ENCODE measurements at regions of chr5 and their contacts with region 1.

Region 1: GRCh38 chr5:113294311-113295110 is 140.3 kb downstream of the TSSK1B start:
- DNase-seq: peak; percentile 88
- H3K4me3 Mint-ChIP-seq: peak overlapping the region; percentile 89
- H3K27ac Mint-ChIP-seq: peak overlapping the region; percentile 55
- H3K4me1 Mint-ChIP-seq: peaks cover 16% of the 10 kb centered on the region
- H3K27me3 Mint-ChIP-seq: peaks cover 13% of the 10 kb centered on the region

Region 2: DNA sequence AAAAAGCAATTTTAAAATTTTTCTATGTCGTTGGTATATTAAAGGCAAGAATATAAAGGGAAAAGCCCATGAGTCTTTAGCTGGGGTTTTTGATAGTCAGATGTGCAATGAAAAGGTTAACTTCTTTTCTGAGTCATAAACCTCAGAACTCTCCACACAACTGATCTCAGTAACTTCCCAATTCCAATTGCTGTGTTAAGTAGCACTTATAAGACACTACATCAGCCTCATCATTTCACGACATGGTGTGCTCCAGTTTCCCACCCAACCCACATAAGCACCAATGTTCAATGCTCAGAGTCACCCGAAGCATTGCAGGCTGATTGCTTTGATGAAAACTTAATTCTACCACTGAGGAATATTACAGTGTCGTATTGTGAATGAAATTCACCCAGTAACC is 15.5 kb before region 1 on chr5:
- CTCF ChIA-PET with region 1: no interaction called
- POLR2A ChIA-PET with region 1: interaction called, 6 read pairs
- intact Hi-C with region 1: loop called (anchors 1 kb)
- DNase-seq: peak; percentile 50
- H3K4me3 Mint-ChIP-seq: no peak overlapping the region
- H3K27ac Mint-ChIP-seq: no peak overlapping the region
- H3K4me1 Mint-ChIP-seq: peaks cover 20% of the 10 kb centered on the region
- H3K27me3 Mint-ChIP-seq: no peaks in the 10 kb centered on the region